ENCODE measurements at regions of chr6 and their contacts with region 1.

Region 1: DNA sequence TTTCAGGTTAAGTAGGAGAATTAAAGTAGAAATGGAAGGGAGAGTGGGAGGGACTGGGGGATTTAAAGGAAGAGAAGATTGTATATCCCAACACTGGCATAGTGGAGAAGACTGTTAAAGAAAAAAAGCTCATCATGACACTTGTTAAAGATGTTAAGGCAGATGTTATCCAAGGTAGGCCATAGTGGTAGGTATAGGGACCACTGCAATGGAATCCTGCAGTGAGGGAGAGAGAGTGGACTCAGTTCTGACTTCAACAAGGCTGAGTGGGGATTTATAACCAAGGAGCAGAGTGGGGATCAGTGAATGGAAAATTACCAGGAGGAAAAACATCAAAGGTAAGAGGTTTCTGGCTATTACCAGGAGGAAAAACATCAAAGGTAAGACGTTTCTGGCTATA is 21.1 kb downstream of the SMPDL3A start:
- DNase-seq: no peak
- H3K4me3 ChIP-seq: no peak overlapping the region
- H3K27ac ChIP-seq: no peak overlapping the region
- H3K4me1 ChIP-seq: no peaks in the 10 kb centered on the region
- H3K27me3 ChIP-seq: no peaks in the 10 kb centered on the region
- CTCF ChIP-seq: no peak
- POLR2A ChIP-seq: no peak

Region 2: DNA sequence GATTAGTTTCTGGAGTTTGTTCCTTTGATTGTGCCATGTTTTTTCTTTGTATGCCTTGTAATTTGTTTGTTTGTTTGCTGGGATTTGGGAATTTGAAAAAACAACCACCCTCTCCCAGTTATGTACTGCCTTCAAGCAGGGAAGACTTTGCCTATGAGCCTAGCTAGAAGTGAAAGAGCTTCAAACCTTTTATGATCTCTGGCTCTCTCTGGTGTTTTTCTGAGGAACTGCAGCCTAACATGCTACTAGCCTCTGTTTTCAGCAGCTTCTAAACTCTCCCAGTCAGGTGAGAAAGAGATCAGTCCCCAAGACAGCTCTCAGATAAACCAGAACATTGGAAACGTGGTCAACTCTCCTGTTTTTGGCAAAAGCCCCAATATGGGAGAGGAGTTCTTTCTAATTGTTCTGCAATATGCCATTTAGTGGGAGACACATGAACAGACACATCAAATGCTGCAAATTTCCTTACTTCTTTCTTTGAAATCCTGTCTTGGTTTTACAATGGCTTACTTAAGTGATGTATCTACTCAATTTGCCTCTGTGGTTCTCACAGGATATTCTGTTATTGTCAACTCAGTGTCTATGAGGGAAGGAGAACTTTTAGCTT is 279.6 kb before region 1 on chr6:
- intact Hi-C with region 1: loop called (anchors 5 kb)
- DNase-seq: peak in 1 of 2 donors; percentile 18
- H3K4me3 ChIP-seq: no peak overlapping the region
- H3K27ac ChIP-seq: no peak overlapping the region
- H3K4me1 ChIP-seq: no peaks in the 10 kb centered on the region
- H3K27me3 ChIP-seq: no peaks in the 10 kb centered on the region
- CTCF ChIP-seq: peak; percentile 42 to 90 (median 76)
- POLR2A ChIP-seq: no peak

Measured in breast epithelium (tissue), 4 donors.